ENCODE measurements at regions of chr17 and their contacts with region 1.

Region 1: GRCh38 chr17:49707608-49708514 is at the start of gene SLC35B1:
- DNase-seq: peak; percentile 100
- H3K4me3 ChIP-seq: peak within 1 kb of the TSS; percentile 69
- H3K4me3 Mint-ChIP-seq: peak within 1 kb of the TSS; percentile 89
- H3K27ac Mint-ChIP-seq: peak within 1 kb of the TSS; percentile 99
- H3K4me1 ChIP-seq: peaks cover 8% of the 10 kb centered on the region
- H3K4me1 Mint-ChIP-seq: peaks cover 28% of the 10 kb centered on the region
- H3K27me3 ChIP-seq: no peaks in the 10 kb centered on the region
- H3K27me3 Mint-ChIP-seq: no peaks in the 10 kb centered on the region
- CTCF ChIP-seq: peak; percentile 82 to 100
- total RNA-seq, gene SLC35B1: 228 and 232 TPM in 2 replicates

Region 2: DNA sequence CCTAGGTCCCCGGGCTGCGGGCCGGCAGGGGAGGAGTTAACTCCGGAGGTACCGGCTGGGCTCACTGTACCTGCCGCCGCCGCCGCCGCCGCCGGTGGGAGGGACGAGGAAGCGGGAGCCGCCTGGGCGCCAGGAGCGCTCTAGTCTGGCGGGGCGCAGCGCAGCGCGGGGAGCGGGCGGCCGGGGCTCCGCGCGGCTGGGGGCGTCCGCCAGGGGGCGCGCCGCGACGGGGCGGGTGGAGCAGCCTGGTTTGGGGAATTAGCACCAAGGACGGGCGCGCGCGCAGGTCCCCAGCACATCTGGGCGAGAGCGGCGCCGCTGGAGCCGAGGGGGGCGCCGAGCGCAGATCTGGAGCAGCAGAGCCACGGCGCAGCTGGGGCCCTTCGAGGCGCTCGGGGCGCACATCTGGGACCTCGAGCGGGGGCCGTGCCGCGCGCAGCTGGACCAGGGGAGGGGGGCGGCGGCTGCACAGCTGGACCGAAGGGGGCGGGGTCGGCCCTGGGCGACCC is 132.2 kb before region 1 on chr17 and contains the start of gene NXPH3:
- CTCF ChIA-PET with region 1: interaction called, 32 read pairs
- POLR2A ChIA-PET with region 1: interaction called, 6 read pairs
- intact Hi-C with region 1: no loop called
- DNase-seq: peak; percentile 89 to 98
- H3K4me3 ChIP-seq: peak within 1 kb of the TSS; percentile 87
- H3K4me3 Mint-ChIP-seq: peak within 1 kb of the TSS; percentile 77
- H3K27ac Mint-ChIP-seq: no peak within 1 kb of the TSS
- H3K4me1 ChIP-seq: peaks cover 16% of the 10 kb centered on the region
- H3K4me1 Mint-ChIP-seq: peaks cover 14% of the 10 kb centered on the region
- H3K27me3 ChIP-seq: no peaks in the 10 kb centered on the region; the same call in 1 of the 2 replicates
- H3K27me3 Mint-ChIP-seq: peaks cover 22% of the 10 kb centered on the region
- CTCF ChIP-seq: peak; percentile 59 to 80
- total RNA-seq, gene NXPH3: 1.7 and 2.0 TPM in 2 replicates

Region 3: DNA sequence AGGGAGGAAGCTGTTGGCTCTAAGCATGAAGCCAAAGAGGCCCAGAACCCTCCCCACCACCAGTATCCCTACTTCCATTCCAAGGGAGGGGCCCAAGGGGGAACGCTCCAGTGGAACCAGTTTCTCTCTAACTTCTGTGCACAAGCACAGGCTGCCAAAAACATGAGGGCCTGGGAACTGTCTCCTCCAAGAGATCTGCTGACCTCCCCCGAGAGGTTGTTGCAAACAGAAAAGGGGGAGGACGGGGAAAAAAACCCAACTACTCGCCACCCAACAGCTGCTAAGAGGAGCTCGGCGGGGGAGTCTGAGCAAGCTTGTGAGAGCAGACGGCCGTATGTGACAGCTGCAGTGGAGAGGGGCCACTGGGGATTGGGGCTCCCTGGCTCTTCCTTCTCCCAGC is 15.6 kb after region 1 on chr17:
- CTCF ChIA-PET with region 1: interaction called, 11 read pairs
- POLR2A ChIA-PET with region 1: no interaction called
- intact Hi-C with region 1: no loop called
- DNase-seq: no peak
- H3K4me3 ChIP-seq: no peak overlapping the region
- H3K4me3 Mint-ChIP-seq: no peak overlapping the region
- H3K27ac Mint-ChIP-seq: no peak overlapping the region
- H3K4me1 ChIP-seq: no peaks in the 10 kb centered on the region
- H3K4me1 Mint-ChIP-seq: no peaks in the 10 kb centered on the region
- H3K27me3 ChIP-seq: no peaks in the 10 kb centered on the region
- H3K27me3 Mint-ChIP-seq: no peaks in the 10 kb centered on the region
- CTCF ChIP-seq: no peak

Region 4: GRCh38 chr17:49779739-49780231 is 71.9 kb after region 1 on chr17:
- CTCF ChIA-PET with region 1: interaction called, 8 read pairs
- POLR2A ChIA-PET with region 1: no interaction called
- intact Hi-C with region 1: loop called (anchors 1 kb)
- DNase-seq: peak in 1 of 2 experiments; percentile 71
- H3K4me3 ChIP-seq: no peak overlapping the region
- H3K4me3 Mint-ChIP-seq: no peak overlapping the region
- H3K27ac Mint-ChIP-seq: no peak overlapping the region
- H3K4me1 ChIP-seq: peaks cover 4% of the 10 kb centered on the region; the same call in 1 of the 2 replicates
- H3K4me1 Mint-ChIP-seq: no peaks in the 10 kb centered on the region
- H3K27me3 ChIP-seq: no peaks in the 10 kb centered on the region
- H3K27me3 Mint-ChIP-seq: peaks cover 20% of the 10 kb centered on the region
- CTCF ChIP-seq: peak; percentile 91 to 94

Region 5: DNA sequence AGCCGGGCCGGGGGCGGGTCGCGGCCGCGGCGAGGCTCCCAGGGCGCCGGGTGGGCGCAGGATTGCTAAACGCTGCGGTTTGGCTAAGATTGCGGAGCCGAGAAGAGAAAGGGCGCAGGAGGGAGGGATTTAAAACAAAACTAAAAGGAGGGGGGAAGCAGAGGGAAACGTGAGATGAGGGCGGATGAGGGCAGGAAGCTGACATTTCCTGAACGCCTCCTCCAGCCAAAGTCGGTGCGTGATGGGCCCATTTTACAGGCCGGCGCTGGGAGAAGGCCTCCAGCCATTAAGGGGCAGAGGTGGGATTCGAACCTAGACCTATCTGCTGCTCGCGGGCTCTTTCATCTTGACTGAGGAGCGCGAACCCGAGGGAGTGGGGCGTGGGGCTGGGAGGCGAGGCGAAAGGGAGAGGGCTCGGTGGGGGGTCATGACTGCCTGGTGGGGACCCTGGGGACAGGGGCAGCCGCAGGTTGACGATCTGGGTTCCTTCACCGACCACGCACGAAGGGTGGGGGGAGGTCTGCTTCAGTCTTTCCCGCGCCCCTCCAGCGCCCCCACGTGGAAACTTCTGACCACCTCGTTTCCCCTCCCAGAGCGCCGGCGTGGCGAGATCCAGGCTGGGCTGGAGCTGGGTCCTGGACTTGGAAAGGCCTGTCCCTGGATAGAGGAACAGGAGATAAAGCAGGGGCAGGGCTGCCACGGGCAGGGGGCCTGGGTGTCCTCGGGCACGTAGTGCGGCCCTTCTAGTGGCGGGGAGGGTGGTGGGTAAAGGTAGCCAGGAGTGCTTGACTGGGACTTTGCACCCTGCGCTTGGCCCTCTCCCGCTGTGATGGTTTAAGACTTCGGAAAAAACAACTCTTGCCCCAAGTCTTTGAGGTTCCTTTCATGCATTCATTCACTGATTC is 143.8 kb after region 1 on chr17:
- CTCF ChIA-PET with region 1: interaction called, 9 read pairs
- POLR2A ChIA-PET with region 1: no interaction called
- intact Hi-C with region 1: loop called (anchors 2 kb)
- DNase-seq: peak; percentile 83 to 92
- H3K4me3 ChIP-seq: peak overlapping the region; percentile 35
- H3K4me3 Mint-ChIP-seq: peak overlapping the region; percentile 65
- H3K27ac Mint-ChIP-seq: peak overlapping the region; percentile 13
- H3K4me1 ChIP-seq: peaks cover 27% of the 10 kb centered on the region
- H3K4me1 Mint-ChIP-seq: peaks cover 22% of the 10 kb centered on the region
- H3K27me3 ChIP-seq: no peaks in the 10 kb centered on the region
- H3K27me3 Mint-ChIP-seq: peaks cover 10% of the 10 kb centered on the region
- CTCF ChIP-seq: peak; percentile 84 to 91

Measured in Caco-2 (cell line).